HCT116 (cell line): ENCODE measurements at regions of chr6 and their contacts with region 1.

Region 1: GRCh38 chr6:12483712-12484111 is 193.6 kb downstream of the EDN1 start:
- DNase-seq: peak; percentile 77
- ATAC-seq: peak; percentile 85
- H3K4me3 ChIP-seq: peak overlapping the region in 1 of 2 experiments; percentile 32; a peak in 2 of 4 replicates
- H3K27ac ChIP-seq: no peak overlapping the region; the same call in 1 of the 2 replicates
- H3K4me1 ChIP-seq: peaks cover 10 to 31% of the 10 kb centered on the region in 2 experiments
- H3K27me3 ChIP-seq: no peaks in the 10 kb centered on the region
- CTCF ChIP-seq: no peak
- POLR2A ChIP-seq: no peak
- RAD21 ChIP-seq: no peak

Region 2: DNA sequence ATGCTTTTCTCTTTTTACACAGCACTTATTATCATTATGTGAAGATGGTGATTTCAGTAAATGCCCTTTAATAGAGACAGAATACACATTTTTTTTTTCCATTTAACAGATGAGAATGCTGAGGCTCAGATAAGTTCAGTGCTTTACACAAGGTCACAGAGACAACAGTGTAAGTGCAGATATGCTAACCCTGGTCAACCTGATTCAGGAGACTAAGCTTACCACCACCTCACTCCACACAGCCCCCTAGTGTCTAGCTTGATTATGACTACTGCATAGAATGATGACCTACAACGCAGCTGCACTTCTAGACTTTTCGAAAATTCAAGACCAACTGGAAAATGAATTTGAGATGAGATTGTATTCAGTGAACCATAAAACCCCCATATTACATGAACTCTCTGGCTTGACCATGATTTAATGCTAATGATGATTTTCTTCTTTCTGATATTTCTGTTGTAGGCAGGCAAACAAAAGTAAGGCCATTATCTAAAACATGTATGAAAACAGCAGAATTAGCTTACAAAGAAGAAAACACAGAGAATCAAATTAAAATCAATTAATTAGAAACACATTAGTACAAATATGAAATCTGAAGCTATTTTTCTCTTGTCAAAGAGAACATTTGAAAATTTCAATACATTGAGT is 20.7 kb after region 1 on chr6:
- CTCF ChIA-PET with region 1: interaction called, 22 read pairs
- POLR2A ChIA-PET with region 1: no interaction called
- RAD21 ChIA-PET with region 1: no interaction called
- intact Hi-C with region 1: no loop called
- DNase-seq: peak; percentile 48
- ATAC-seq: peak; percentile 96
- H3K4me3 ChIP-seq: no peak overlapping the region
- H3K27ac ChIP-seq: no peak overlapping the region
- H3K4me1 ChIP-seq: no peaks in the 10 kb centered on the region
- H3K27me3 ChIP-seq: no peaks in the 10 kb centered on the region
- CTCF ChIP-seq: peak; percentile 39 to 76 (median 65); a peak in 5 of 6 replicates
- POLR2A ChIP-seq: no peak
- RAD21 ChIP-seq: peak; percentile 66

Region 3: DNA sequence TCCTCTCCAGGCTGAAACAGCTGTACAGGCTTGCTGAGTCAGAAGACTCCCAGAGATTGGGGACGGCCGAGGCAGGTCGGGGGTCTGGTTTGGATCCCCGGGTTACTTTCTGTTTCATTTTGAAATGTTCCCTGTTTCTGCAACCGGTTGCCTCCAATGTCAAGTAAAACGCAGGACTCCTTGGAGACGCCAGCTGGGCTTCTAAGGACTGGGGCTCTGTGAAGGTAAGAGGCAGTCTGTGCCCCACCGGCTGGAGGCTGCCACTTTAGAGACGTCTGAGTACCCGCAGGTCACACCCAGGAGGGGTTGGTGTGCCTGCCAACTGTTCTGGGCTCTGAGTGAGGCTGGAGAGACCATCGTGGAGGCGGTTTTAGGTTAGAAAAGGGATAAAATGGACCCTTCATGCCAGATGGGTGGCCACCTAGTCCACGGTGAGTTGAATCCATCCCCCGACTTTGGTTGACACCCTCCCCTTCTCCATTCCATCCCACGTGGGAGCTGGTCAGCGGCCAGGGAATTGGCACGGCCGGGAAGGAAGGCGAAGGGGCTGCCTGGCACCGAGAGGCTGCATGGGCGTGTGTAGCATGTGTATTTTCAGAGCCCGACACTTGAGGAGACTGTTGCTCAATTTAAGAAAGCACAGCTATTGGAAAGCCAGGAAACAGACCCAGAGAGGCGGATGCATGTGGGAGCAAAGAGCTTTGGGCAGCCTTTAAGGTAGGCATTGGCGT is 473.8 kb after region 1 on chr6:
- CTCF ChIA-PET with region 1: no interaction called
- POLR2A ChIA-PET with region 1: no interaction called
- RAD21 ChIA-PET with region 1: no interaction called
- intact Hi-C with region 1: no loop called
- DNase-seq: no peak
- ATAC-seq: no peak
- H3K4me3 ChIP-seq: no peak overlapping the region
- H3K27ac ChIP-seq: no peak overlapping the region
- H3K4me1 ChIP-seq: no peaks in the 10 kb centered on the region
- H3K27me3 ChIP-seq: peaks cover 78% of the 10 kb centered on the region
- CTCF ChIP-seq: no peak
- POLR2A ChIP-seq: no peak
- RAD21 ChIP-seq: no peak